Right ventricle myocardium inferior (tissue), 1 donor: ENCODE measurements at regions of chr22 and their contacts with region 1.

Region 1: GRCh38 chr22:17057959-17058814 is 26.6 kb upstream of the IL17RA start:
- DNase-seq: no peak
- ATAC-seq: peak; percentile 79

Region 2: GRCh38 chr22:16917144-16918003 is 140.8 kb before region 1 on chr22:
- intact Hi-C with region 1: loop called (anchors 10 kb)
- DNase-seq: no peak
- ATAC-seq: peak; percentile 23

Region 3: DNA sequence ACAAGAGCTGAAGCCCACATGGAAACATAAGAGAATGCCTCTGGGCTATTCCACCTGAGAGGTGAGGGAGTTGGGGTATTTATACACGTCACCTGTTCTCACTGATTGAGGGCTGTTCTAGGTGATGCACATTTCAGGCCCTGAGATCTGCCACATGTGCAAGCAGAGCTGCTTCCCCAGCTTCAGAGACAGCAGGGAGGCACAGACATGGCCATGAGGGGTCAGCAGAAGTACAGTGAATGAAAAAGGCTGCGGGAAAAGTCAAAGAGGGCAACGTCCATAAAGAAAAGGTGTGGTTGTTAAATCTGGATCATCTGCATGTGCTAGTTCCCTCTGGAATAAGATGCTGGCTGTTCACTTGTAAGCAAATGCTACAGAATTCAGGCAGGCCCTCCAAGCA is 125.6 kb before region 1 on chr22:
- intact Hi-C with region 1: loop called (anchors 5 kb)
- DNase-seq: no peak
- ATAC-seq: no peak